ENCODE measurements at regions of chr5 and their contacts with region 1.

Region 1: GRCh38 chr5:35777358-35778087 is 79.2 kb upstream of the IL7R start:
- DNase-seq: peak; percentile 29
- CTCF ChIP-seq: peak; percentile 61

Region 2: GRCh38 chr5:35717718-35718117 is 59.8 kb before region 1 on chr5:
- CTCF ChIA-PET with region 1: no interaction called
- POLR2A ChIA-PET with region 1: no interaction called
- DNase-seq: no peak
- CTCF ChIP-seq: no peak

Region 3: GRCh38 chr5:35794684-35795375 is 17.3 kb after region 1 on chr5:
- CTCF ChIA-PET with region 1: interaction called, 41 read pairs
- POLR2A ChIA-PET with region 1: no interaction called
- DNase-seq: no peak
- CTCF ChIP-seq: no peak

Measured in GM10248 (cell line).